ENCODE measurements at regions of chr10 and their contacts with region 1.

Region 1: GRCh38 chr10:25113191-25114035 is 61.4 kb upstream of the GPR158 start:
- DNase-seq: peak; percentile 26 to 38
- ATAC-seq: peak; percentile 77
- H3K4me3 ChIP-seq: no peak overlapping the region
- H3K27ac ChIP-seq: no peak overlapping the region
- H3K4me1 ChIP-seq: no peaks in the 10 kb centered on the region
- H3K27me3 ChIP-seq: no peaks in the 10 kb centered on the region
- CTCF ChIP-seq: peak; percentile 20 to 67 (median 50)
- POLR2A ChIP-seq: no peak

Region 2: GRCh38 chr10:24272374-24272773 is 841.0 kb before region 1 on chr10:
- in situ Hi-C with region 1: no loop called
- intact Hi-C with region 1: no loop called
- DNase-seq: no peak
- ATAC-seq: no peak
- H3K4me3 ChIP-seq: no peak overlapping the region
- H3K27ac ChIP-seq: peak overlapping the region; percentile 82 to 87 (median 86)
- H3K4me1 ChIP-seq: peaks cover 24 to 25% of the 10 kb centered on the region in 2 donors
- H3K27me3 ChIP-seq: no peaks in the 10 kb centered on the region
- CTCF ChIP-seq: no peak
- POLR2A ChIP-seq: no peak

Region 3: DNA sequence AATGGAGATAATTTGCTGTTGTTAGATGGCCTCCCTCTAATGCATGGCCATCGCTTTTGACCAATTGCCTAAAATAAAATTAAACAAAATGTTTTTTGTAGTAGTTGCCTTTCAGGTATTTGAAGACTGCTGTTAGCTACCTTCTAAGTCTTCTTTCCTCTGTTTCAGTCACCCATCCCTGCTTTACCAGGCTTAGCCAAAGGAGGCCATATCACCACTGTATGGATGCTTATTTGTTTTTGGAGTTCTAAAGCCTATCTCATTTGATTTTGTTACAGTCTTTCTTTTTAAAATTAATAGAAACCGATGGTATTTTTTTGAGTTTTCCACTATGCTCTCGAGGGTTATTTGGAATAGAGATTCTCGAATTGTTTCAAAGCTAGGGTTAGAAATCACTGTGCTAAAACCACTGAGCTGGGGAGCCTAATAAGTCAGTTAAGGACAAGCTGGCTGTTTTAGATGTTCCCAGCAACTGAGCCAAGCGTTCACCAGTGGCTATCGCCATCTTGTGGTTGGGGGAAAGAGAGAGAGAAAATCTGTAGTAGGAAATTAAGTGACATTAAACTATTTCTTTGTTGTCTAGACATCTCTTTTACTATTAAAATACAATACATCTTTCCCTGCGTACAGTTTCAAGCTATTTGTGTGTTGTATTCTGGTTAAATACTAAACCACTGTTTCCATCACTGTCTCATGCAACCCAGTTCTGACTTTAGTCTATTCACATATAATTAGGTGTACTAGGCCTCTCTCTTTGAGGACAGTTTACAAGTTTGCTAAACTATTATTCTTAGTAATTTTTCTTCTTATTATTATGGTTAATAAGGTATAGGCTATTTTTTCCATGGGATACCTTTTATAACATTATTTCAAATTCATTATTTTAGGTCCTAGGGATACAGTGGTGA is 113.6 kb after region 1 on chr10:
- in situ Hi-C with region 1: no loop called
- intact Hi-C with region 1: loop called (anchors 2 kb)
- DNase-seq: no peak
- ATAC-seq: no peak
- H3K4me3 ChIP-seq: no peak overlapping the region
- H3K27ac ChIP-seq: no peak overlapping the region
- H3K4me1 ChIP-seq: no peaks in the 10 kb centered on the region
- H3K27me3 ChIP-seq: no peaks in the 10 kb centered on the region
- CTCF ChIP-seq: peak in 2 of 5 experiments; percentile 42 to 48
- POLR2A ChIP-seq: no peak

Region 4: DNA sequence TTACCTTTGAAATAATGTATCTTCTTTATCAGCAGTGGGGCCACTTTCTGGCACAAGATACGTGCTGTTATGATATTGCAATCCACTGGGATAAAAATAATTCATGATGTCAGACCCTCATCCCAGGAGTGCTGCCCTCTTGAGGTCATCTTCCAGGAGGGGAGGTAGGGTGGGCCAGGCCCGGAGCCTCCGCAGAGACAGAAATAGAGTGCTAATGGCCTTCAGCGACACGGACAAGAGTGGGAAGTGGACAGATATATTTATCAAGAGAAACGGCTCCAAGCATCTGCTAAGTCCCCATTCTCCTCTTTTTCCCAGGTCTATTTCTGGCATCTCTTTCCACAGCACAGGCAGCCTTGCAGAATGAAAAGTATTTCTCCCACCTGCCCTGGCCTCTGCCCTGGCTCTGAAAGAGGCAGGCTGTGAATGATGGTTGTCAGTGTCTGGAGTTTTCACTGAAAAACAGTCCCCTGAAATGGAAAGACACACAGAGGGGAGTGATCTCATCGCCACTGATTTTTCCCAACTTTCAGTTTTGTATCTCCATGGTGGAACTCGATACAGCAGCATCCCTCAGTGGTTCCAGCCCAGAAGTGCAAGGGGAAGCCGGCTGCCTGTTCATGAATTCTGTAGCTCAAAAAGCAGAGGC is 568.9 kb after region 1 on chr10:
- in situ Hi-C with region 1: loop called in 2 of 4 experiments (anchors 25 kb)
- intact Hi-C with region 1: no loop called
- DNase-seq: peak in 1 of 2 donors; percentile 17
- ATAC-seq: peak; percentile 45 to 92
- H3K4me3 ChIP-seq: peak overlapping the region in 3 of 4 donors; percentile 20 to 30 (median 22)
- H3K27ac ChIP-seq: peak overlapping the region in 3 of 4 donors; percentile 20 to 23 (median 22)
- H3K4me1 ChIP-seq: peaks cover 0 to 7% of the 10 kb centered on the region in 2 donors
- H3K27me3 ChIP-seq: no peaks in the 10 kb centered on the region
- CTCF ChIP-seq: peak in 2 of 5 experiments; percentile 5 to 17
- POLR2A ChIP-seq: no peak

Region 5: GRCh38 chr10:25701652-25702051 is 588.2 kb after region 1 on chr10:
- in situ Hi-C with region 1: loop called in 3 of 4 experiments (anchors 25 kb)
- intact Hi-C with region 1: no loop called
- DNase-seq: no peak
- ATAC-seq: no peak
- H3K4me3 ChIP-seq: no peak overlapping the region
- H3K27ac ChIP-seq: no peak overlapping the region
- H3K4me1 ChIP-seq: no peaks in the 10 kb centered on the region
- H3K27me3 ChIP-seq: no peaks in the 10 kb centered on the region
- CTCF ChIP-seq: no peak
- POLR2A ChIP-seq: no peak

Region 6: DNA sequence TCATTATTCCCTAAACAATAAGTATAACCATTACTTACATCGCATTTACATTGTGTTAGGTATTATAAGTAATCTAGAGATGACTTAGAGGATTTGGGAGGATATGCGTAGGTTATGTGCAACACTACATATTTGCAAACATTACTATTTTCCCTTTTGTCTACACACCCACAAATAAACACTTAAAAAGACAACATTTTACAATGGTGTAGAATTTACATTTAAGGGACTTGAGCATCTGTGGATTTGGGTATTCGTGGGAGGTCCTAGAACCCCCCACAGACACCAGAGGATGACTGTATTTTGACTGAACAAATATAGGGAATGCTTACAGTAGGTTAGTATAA is 600.5 kb after region 1 on chr10:
- in situ Hi-C with region 1: loop called in 1 of 4 experiments (anchors 25 kb)
- intact Hi-C with region 1: loop called (anchors 10 kb)
- DNase-seq: no peak
- ATAC-seq: no peak
- H3K4me3 ChIP-seq: no peak overlapping the region
- H3K27ac ChIP-seq: no peak overlapping the region
- H3K4me1 ChIP-seq: no peaks in the 10 kb centered on the region
- H3K27me3 ChIP-seq: no peaks in the 10 kb centered on the region
- CTCF ChIP-seq: no peak
- POLR2A ChIP-seq: no peak

Measured in gastrocnemius medialis (tissue), 4 donors.